ENCODE measurements at regions of chr1 and their contacts with region 1.

Region 1: DNA sequence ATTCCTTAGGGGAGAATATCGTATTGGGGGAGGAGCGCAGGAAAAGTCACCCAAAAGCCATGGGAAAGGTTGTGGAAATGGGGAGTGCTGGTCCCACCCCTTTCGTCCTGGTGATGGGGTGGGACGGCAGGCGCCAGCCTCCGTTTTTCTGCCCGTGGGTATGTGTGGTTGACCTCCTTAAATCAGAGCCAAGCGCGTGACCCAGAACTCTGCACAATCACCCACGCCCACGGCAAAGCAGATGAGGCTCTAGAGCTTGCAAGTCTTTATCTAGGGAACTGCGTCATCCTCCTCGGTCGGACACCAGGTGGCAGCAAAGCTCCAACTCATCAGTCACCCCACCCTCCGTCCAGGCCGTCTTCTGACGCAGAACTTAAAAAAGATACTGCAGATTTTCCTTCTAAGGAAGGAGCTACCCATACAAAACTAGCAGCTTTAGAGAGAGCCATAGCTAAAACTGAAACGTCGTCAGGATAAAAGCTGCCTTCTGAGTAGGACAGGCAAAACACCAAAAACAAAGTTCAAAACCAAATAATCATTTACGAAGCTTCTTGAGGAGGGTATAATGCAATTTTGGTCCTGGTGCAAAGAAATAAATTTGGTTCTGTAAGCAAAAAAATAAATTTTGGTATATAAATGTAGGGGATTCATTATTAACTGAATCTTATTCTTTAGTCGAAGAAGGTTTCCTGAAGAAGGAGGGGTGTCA is 62.0 kb downstream of the TBX19 start:
- DNase-seq: peak; percentile 81 to 92 (median 84)
- H3K4me3 ChIP-seq: peak overlapping the region; percentile 23
- H3K4me3 Mint-ChIP-seq: peak overlapping the region; percentile 4 to 70 (median 51)
- H3K27ac ChIP-seq: peak overlapping the region; percentile 10
- H3K27ac Mint-ChIP-seq: peak overlapping the region; percentile 85 to 98 (median 94)
- H3K4me1 ChIP-seq: peaks cover 24% of the 10 kb centered on the region
- H3K4me1 Mint-ChIP-seq: peaks cover 54 to 60% (median 57%) of the 10 kb centered on the region in 3 donors
- H3K27me3 ChIP-seq: no peaks in the 10 kb centered on the region
- H3K27me3 Mint-ChIP-seq: no peaks in the 10 kb centered on the region

Region 2: DNA sequence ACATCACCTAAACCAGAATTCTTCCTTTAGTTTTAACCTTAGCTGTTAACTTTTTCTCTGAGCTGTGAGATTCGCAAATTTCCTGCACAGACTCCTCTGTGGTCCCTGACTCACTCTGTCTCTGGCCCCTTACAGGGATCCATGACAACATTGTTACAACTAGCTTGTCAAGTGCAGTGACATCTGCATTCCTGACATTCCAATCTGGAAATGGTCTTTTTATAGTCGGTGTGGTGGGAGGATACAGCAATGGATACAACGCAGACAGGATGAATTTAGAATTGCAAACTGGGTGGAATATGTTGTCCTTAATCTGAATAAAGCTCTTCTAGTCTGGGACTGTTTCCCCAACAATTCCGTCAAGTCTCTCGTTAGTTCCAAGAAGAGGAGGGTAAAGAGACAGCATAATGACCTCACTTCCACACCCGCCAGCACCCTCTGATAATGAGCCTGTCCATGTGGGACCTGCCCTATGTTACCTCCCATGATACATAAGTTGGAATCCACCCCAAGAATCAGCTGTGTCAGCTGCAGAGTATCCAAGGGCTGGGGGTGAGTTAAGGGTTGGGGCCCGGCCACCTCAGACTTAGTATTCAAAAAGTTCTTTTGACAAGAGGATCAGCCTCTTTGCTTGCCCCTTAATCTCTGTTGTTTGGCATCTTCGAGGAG is 1416.8 kb before region 1 on chr1:
- CTCF ChIA-PET with region 1: no interaction called
- POLR2A ChIA-PET with region 1: no interaction called
- DNase-seq: no peak
- H3K4me3 ChIP-seq: no peak overlapping the region
- H3K4me3 Mint-ChIP-seq: no peak overlapping the region
- H3K27ac ChIP-seq: no peak overlapping the region
- H3K27ac Mint-ChIP-seq: no peak overlapping the region
- H3K4me1 ChIP-seq: no peaks in the 10 kb centered on the region
- H3K4me1 Mint-ChIP-seq: no peaks in the 10 kb centered on the region
- H3K27me3 ChIP-seq: peaks cover 11% of the 10 kb centered on the region
- H3K27me3 Mint-ChIP-seq: peaks cover 16 to 48% of the 10 kb centered on the region in 2 donors

Region 3: GRCh38 chr1:168234846-168235547 is 107.7 kb before region 1 on chr1:
- CTCF ChIA-PET with region 1: interaction called, 24 read pairs
- POLR2A ChIA-PET with region 1: no interaction called
- DNase-seq: peak in 4 of 5 donors; percentile 22 to 57 (median 30)
- H3K4me3 ChIP-seq: no peak overlapping the region
- H3K4me3 Mint-ChIP-seq: no peak overlapping the region
- H3K27ac ChIP-seq: no peak overlapping the region
- H3K27ac Mint-ChIP-seq: peak overlapping the region in 6 of 8 donors; percentile 13 to 89 (median 52)
- H3K4me1 ChIP-seq: peaks cover 15% of the 10 kb centered on the region
- H3K4me1 Mint-ChIP-seq: peaks cover 42 to 70% (median 64%) of the 10 kb centered on the region in 3 donors
- H3K27me3 ChIP-seq: no peaks in the 10 kb centered on the region
- H3K27me3 Mint-ChIP-seq: no peaks in the 10 kb centered on the region

Region 4: GRCh38 chr1:168372861-168373371 is 30.2 kb after region 1 on chr1:
- CTCF ChIA-PET with region 1: interaction called, 17 read pairs
- POLR2A ChIA-PET with region 1: no interaction called
- DNase-seq: no peak
- H3K4me3 ChIP-seq: no peak overlapping the region
- H3K4me3 Mint-ChIP-seq: no peak overlapping the region
- H3K27ac ChIP-seq: peak overlapping the region; percentile 28
- H3K27ac Mint-ChIP-seq: no peak overlapping the region
- H3K4me1 ChIP-seq: no peaks in the 10 kb centered on the region
- H3K4me1 Mint-ChIP-seq: peaks cover 0 to 3% (median 0%) of the 10 kb centered on the region in 3 donors
- H3K27me3 ChIP-seq: no peaks in the 10 kb centered on the region
- H3K27me3 Mint-ChIP-seq: peaks cover 0 to 1% of the 10 kb centered on the region in 2 donors

Region 5: GRCh38 chr1:168408536-168409242 is 66.0 kb after region 1 on chr1:
- CTCF ChIA-PET with region 1: interaction called, 10 read pairs
- POLR2A ChIA-PET with region 1: no interaction called
- DNase-seq: peak in 4 of 5 donors; percentile 23 to 76 (median 50)
- H3K4me3 ChIP-seq: no peak overlapping the region
- H3K4me3 Mint-ChIP-seq: peak overlapping the region; percentile 48 to 82 (median 70)
- H3K27ac ChIP-seq: no peak overlapping the region
- H3K27ac Mint-ChIP-seq: peak overlapping the region; percentile 59 to 96 (median 88)
- H3K4me1 ChIP-seq: peaks cover 37% of the 10 kb centered on the region
- H3K4me1 Mint-ChIP-seq: peaks cover 49 to 63% (median 50%) of the 10 kb centered on the region in 3 donors
- H3K27me3 ChIP-seq: no peaks in the 10 kb centered on the region
- H3K27me3 Mint-ChIP-seq: peaks cover 0 to 5% of the 10 kb centered on the region in 2 donors

Region 6: GRCh38 chr1:168439456-168440375 is 97.0 kb after region 1 on chr1:
- CTCF ChIA-PET with region 1: interaction called, 116 read pairs
- POLR2A ChIA-PET with region 1: interaction called, 11 read pairs
- DNase-seq: peak; percentile 67 to 89 (median 80)
- H3K4me3 ChIP-seq: peak overlapping the region; percentile 48
- H3K4me3 Mint-ChIP-seq: peak overlapping the region; percentile 44 to 93 (median 85)
- H3K27ac ChIP-seq: no peak overlapping the region
- H3K27ac Mint-ChIP-seq: peak overlapping the region; percentile 56 to 93 (median 88)
- H3K4me1 ChIP-seq: peaks cover 45% of the 10 kb centered on the region
- H3K4me1 Mint-ChIP-seq: peaks cover 58 to 65% (median 60%) of the 10 kb centered on the region in 3 donors
- H3K27me3 ChIP-seq: no peaks in the 10 kb centered on the region
- H3K27me3 Mint-ChIP-seq: peaks cover 0 to 1% of the 10 kb centered on the region in 2 donors

Region 7: GRCh38 chr1:168603501-168604110 is 260.9 kb after region 1 on chr1:
- CTCF ChIA-PET with region 1: interaction called, 24 read pairs
- POLR2A ChIA-PET with region 1: no interaction called
- DNase-seq: peak; percentile 53 to 77 (median 54)
- H3K4me3 ChIP-seq: no peak overlapping the region
- H3K4me3 Mint-ChIP-seq: no peak overlapping the region
- H3K27ac ChIP-seq: no peak overlapping the region
- H3K27ac Mint-ChIP-seq: peak overlapping the region in 1 of 8 donors; percentile 22
- H3K4me1 ChIP-seq: no peaks in the 10 kb centered on the region
- H3K4me1 Mint-ChIP-seq: peaks cover 0 to 4% (median 0%) of the 10 kb centered on the region in 3 donors
- H3K27me3 ChIP-seq: no peaks in the 10 kb centered on the region
- H3K27me3 Mint-ChIP-seq: peaks cover 0 to 3% of the 10 kb centered on the region in 2 donors

Region 8: DNA sequence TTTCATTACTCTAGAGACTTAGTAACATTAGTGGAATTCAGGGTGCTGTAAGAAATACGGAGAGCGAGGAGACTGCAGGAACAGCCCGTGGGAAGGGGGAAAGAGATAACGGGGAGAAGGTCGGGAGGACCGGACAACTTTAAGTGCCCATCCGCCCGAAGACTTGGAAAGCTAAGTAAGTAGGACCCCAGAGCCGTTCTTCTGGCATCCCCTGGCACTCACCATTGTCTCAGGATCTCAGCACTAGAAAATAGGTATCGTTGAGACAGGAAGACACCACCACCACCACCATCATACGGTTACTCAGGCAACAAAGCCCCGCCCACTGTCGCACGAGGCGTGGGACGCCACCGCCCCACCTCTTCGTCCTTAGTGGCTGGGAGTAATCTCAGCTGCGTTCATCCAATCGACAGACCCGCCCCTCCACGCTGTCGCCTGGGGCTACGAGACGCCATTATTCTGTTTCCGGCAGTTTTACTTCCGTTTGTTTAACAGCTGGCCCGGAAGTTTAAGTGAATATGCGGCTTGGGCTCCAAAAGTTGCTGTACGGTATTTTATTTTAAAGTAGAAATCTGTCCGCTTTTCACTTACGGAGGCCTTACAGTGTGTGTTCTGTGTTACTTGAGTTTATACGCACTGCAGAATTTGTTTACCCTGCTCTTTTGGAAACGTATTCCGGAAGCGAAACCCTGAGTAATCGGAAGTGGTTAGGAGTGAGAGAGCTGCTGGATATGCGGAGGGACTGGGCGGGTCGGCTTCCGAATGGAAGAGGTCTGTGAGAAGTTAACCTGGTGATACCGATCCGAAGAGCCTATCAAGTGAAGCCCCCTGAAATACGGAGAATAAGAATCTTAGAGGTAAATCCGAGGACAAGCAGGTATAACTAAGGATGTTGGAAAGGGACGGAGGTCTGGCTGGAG is 1025.0 kb after region 1 on chr1 and contains the starts of genes BLZF1 and NME7:
- CTCF ChIA-PET with region 1: interaction called, 14 read pairs
- POLR2A ChIA-PET with region 1: interaction called, 3 read pairs
- DNase-seq: peak; percentile 96 to 99 (median 98)
- H3K4me3 ChIP-seq: peak within 1 kb of the TSS; percentile 93
- H3K4me3 Mint-ChIP-seq: peak within 1 kb of the TSS in 1 of 7 donors; percentile 47
- H3K27ac ChIP-seq: peak within 1 kb of the TSS; percentile 92
- H3K27ac Mint-ChIP-seq: peak within 1 kb of the TSS in 2 of 8 donors; percentile 25 to 77
- H3K4me1 ChIP-seq: peaks cover 22% of the 10 kb centered on the region
- H3K4me1 Mint-ChIP-seq: peaks cover 39 to 53% (median 39%) of the 10 kb centered on the region in 3 donors
- H3K27me3 ChIP-seq: no peaks in the 10 kb centered on the region
- H3K27me3 Mint-ChIP-seq: no peaks in the 10 kb centered on the region
- total RNA-seq, gene BLZF1: 13.5 to 17.4 TPM
- total RNA-seq, gene NME7: 21.7 to 25.3 TPM